Testis (tissue), 5 donors: ENCODE measurements at regions of chr4 and their contacts with region 1.

Region 1: GRCh38 chr4:118981839-118982381 is 93.3 kb downstream of the SYNPO2 start:
- DNase-seq: peak; percentile 77
- H3K4me3 ChIP-seq: no peak overlapping the region
- H3K27ac ChIP-seq: peak overlapping the region in 1 of 2 donors; percentile 36
- H3K4me1 ChIP-seq: peaks cover 18% of the 10 kb centered on the region
- H3K27me3 ChIP-seq: no peaks in the 10 kb centered on the region
- CTCF ChIP-seq: peak; percentile 67 to 83 (median 76)
- POLR2A ChIP-seq: no peak

Region 2: DNA sequence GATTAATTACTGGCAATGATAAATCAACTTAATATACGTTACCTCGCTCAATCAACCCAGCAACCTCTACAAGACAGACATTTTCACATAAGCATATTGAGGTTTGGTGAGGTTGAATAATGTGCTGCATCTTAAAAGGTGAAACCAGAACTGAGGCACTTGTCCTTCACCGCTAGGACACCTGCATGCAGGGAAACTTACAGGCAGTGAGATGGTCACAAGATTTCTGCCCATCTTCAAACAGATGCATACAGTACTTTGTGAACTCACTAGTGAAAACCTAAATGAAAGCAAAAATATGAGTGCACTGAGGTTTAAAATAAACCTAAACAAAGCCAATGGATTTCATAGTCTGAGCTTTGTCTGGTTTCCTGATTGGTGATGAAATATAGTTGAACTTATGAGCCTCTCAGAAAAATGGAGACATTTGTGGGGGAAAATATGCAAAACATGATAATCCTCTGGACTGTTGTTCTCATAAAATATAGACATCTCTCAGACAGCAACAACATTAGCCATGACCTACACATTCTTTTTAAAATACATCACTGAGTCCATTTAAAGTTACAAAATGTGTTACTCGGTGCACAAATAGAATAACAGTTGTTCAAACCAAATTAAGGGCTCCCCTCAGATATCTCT is 608.2 kb before region 1 on chr4:
- intact Hi-C with region 1: no loop called
- DNase-seq: no peak
- H3K4me3 ChIP-seq: no peak overlapping the region
- H3K27ac ChIP-seq: no peak overlapping the region
- H3K4me1 ChIP-seq: no peaks in the 10 kb centered on the region
- H3K27me3 ChIP-seq: no peaks in the 10 kb centered on the region
- CTCF ChIP-seq: no peak
- POLR2A ChIP-seq: no peak

Region 3: DNA sequence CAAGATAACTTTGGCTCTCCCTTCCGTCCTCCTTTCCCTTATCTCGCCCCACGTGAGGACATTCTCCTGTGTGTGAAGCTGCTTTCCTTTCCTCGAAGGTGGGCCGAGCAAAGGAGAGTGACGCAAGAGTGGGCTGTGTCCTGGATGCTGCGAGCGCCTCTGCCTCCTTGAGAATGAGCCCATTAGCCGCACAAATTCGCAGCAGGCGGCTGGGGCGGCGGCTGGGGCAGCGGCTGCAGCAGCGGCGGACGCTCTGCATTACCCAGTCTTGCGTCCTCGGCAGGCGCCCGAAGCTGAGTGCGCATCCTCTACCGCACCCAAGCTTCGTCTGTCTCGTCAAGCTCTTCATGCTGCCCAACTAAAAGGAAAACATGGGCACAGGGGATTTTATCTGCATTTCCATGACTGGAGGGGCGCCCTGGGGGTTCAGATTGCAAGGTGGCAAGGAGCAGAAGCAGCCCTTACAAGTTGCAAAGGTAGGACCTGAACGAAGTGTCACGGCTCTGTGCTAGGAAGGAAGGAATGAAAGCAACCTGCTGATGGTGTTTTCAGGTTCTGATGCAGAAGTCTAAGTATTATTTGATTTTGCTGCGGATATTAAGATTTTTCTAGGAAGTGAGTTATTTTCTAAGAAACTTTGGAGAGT is 93.1 kb before region 1 on chr4 and contains the start of gene SYNPO2:
- intact Hi-C with region 1: no loop called
- DNase-seq: peak; percentile 95
- H3K4me3 ChIP-seq: peak within 1 kb of the TSS; percentile 67 to 74
- H3K27ac ChIP-seq: peak within 1 kb of the TSS; percentile 71 to 84
- H3K4me1 ChIP-seq: peaks cover 11% of the 10 kb centered on the region
- H3K27me3 ChIP-seq: no peaks in the 10 kb centered on the region
- CTCF ChIP-seq: no peak
- POLR2A ChIP-seq: peak; percentile 91
- total RNA-seq, gene SYNPO2: 44.3 to 53.4 TPM

Region 4: GRCh38 chr4:119286377-119287002 is 304.6 kb after region 1 on chr4:
- intact Hi-C with region 1: loop called (anchors 5 kb)
- DNase-seq: peak; percentile 43
- H3K4me3 ChIP-seq: no peak overlapping the region
- H3K27ac ChIP-seq: no peak overlapping the region
- H3K4me1 ChIP-seq: peaks cover 6% of the 10 kb centered on the region
- H3K27me3 ChIP-seq: no peaks in the 10 kb centered on the region
- CTCF ChIP-seq: peak; percentile 59 to 73 (median 70)
- POLR2A ChIP-seq: no peak